ENCODE measurements at regions of chr9 and their contacts with region 1.

Region 1: DNA sequence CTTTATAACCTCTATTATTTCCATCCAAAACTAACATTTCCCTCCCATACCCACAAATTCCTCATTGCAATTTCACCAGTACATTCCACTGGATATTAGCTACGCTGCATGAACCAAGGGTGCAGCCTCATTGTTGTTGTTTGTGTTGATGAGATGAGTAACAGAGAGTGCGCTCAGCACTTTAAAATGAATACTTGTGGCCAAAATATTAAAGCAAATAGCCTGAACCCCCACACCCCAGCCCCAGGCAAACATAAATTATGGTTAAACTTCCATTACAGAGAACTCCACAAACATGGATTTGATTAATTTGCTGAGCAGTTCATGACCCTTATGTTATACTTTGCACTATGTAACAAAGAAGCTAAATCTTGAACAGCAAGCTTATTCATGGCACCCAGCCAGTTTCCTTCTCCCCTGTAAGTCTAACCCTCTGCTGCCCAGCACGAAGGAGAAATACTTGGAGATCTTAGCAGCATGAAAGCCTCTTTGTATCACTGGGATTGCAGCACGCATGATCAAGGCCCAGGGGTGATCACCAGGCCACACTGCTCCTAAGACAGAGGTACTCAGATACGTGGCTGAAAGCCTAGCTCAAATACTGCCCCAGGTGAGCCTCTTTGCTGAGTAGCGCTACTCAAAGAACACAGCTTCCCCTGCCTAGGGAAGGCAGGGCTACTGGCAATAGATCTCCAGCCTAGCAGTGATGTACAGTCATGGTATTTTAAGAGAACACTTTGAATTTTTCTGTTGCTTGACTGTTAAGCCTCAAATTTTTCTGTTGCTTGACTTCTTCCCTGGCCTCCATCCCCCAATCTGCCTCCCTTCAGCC is 205.1 kb downstream of the DOCK8 start:
- DNase-seq: no peak
- ATAC-seq: no peak
- H3K4me3 ChIP-seq: no peak overlapping the region
- H3K4me3 Mint-ChIP-seq: no peak overlapping the region
- H3K27ac ChIP-seq: no peak overlapping the region
- H3K27ac Mint-ChIP-seq: peak overlapping the region in 6 of 9 donors; percentile 10 to 63 (median 33)
- H3K4me1 ChIP-seq: peaks cover 0 to 3% of the 10 kb centered on the region in 2 donors
- H3K4me1 Mint-ChIP-seq: peaks cover 0 to 2% (median 0%) of the 10 kb centered on the region in 7 donors
- H3K27me3 ChIP-seq: no peaks in the 10 kb centered on the region
- H3K27me3 Mint-ChIP-seq: no peaks in the 10 kb centered on the region

Region 2: GRCh38 chr9:336039-336438 is 83.7 kb before region 1 on chr9:
- CTCF ChIA-PET with region 1: no interaction called
- POLR2A ChIA-PET with region 1: no interaction called
- intact Hi-C with region 1: loop called in 1 of 2 experiments (anchors 10 kb)
- DNase-seq: no peak
- ATAC-seq: no peak
- H3K4me3 ChIP-seq: no peak overlapping the region
- H3K4me3 Mint-ChIP-seq: no peak overlapping the region
- H3K27ac ChIP-seq: no peak overlapping the region
- H3K27ac Mint-ChIP-seq: peak overlapping the region in 8 of 9 donors; percentile 41 to 92 (median 68)
- H3K4me1 ChIP-seq: peaks cover 0 to 8% of the 10 kb centered on the region in 2 donors
- H3K4me1 Mint-ChIP-seq: peaks cover 13 to 35% (median 25%) of the 10 kb centered on the region in 7 donors
- H3K27me3 ChIP-seq: no peaks in the 10 kb centered on the region
- H3K27me3 Mint-ChIP-seq: no peaks in the 10 kb centered on the region

Region 3: DNA sequence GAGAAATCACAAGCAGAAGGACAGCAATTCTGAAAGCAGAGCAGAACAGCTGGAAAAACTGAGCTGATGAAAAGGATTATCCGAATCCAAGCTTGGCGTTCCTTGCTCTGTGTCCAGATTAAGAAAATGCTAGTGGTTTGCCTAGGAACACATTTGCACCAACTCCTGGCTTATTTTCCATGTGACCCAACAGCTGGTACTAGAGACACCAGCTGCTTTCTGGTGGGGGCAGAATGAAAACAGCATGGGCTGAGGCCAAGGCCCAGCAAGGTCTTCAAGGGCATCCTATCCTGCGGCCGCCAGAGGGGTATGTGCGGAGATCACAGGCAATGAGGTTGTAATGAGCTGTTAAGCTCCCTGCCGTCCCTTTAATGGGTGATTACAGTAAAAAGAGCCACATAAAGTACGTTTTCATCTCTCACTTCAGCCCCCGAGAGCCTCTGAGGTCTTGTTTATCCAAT is 73.6 kb before region 1 on chr9:
- CTCF ChIA-PET with region 1: no interaction called
- POLR2A ChIA-PET with region 1: no interaction called
- intact Hi-C with region 1: no loop called
- DNase-seq: no peak
- ATAC-seq: no peak
- H3K4me3 ChIP-seq: no peak overlapping the region
- H3K4me3 Mint-ChIP-seq: no peak overlapping the region
- H3K27ac ChIP-seq: no peak overlapping the region
- H3K27ac Mint-ChIP-seq: peak overlapping the region in 3 of 9 donors; percentile 15 to 36 (median 26)
- H3K4me1 ChIP-seq: peaks cover 0 to 8% of the 10 kb centered on the region in 2 donors
- H3K4me1 Mint-ChIP-seq: peaks cover 13 to 37% (median 27%) of the 10 kb centered on the region in 7 donors
- H3K27me3 ChIP-seq: no peaks in the 10 kb centered on the region
- H3K27me3 Mint-ChIP-seq: no peaks in the 10 kb centered on the region

Region 4: DNA sequence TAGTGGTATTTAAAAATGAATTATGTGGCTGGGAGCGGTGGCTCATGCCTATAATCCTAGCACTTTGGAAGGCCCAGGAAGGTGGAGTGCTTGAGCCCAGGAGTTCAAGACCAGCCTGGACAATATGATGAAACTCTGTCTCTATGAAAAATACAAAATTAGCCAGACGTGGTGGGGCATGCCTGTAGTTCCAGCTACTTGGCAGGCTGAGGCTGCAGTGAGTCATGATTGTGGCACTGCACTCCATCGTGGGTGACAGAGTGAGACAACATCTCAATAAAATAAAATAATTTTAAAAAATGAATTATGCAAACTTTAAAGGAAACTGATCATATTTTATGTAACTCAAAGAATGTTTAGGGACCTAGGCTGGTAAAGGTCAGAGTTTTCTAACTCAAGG is 110.9 kb after region 1 on chr9:
- CTCF ChIA-PET with region 1: no interaction called
- POLR2A ChIA-PET with region 1: no interaction called
- intact Hi-C with region 1: no loop called
- DNase-seq: no peak
- ATAC-seq: no peak
- H3K4me3 ChIP-seq: no peak overlapping the region
- H3K4me3 Mint-ChIP-seq: no peak overlapping the region
- H3K27ac ChIP-seq: no peak overlapping the region
- H3K27ac Mint-ChIP-seq: peak overlapping the region in 2 of 9 donors; percentile 2 to 25
- H3K4me1 ChIP-seq: no peaks in the 10 kb centered on the region
- H3K4me1 Mint-ChIP-seq: peaks cover 0 to 22% (median 4%) of the 10 kb centered on the region in 7 donors
- H3K27me3 ChIP-seq: no peaks in the 10 kb centered on the region
- H3K27me3 Mint-ChIP-seq: peaks cover 0 to 3% (median 0%) of the 10 kb centered on the region in 5 donors

Region 5: GRCh38 chr9:2072752-2073405 is 1653.1 kb after region 1 on chr9:
- CTCF ChIA-PET with region 1: no interaction called
- POLR2A ChIA-PET with region 1: no interaction called
- intact Hi-C with region 1: no loop called
- DNase-seq: no peak
- ATAC-seq: no peak
- H3K4me3 ChIP-seq: no peak overlapping the region
- H3K4me3 Mint-ChIP-seq: no peak overlapping the region
- H3K27ac ChIP-seq: no peak overlapping the region
- H3K27ac Mint-ChIP-seq: peak overlapping the region in 5 of 9 donors; percentile 24 to 66 (median 38)
- H3K4me1 ChIP-seq: no peaks in the 10 kb centered on the region
- H3K4me1 Mint-ChIP-seq: peaks cover 0 to 15% (median 0%) of the 10 kb centered on the region in 7 donors
- H3K27me3 ChIP-seq: no peaks in the 10 kb centered on the region
- H3K27me3 Mint-ChIP-seq: no peaks in the 10 kb centered on the region

Measured in naive thymus-derived CD4-positive, alpha-beta T cell (primary cell).